Activated CD4-positive, alpha-beta memory T cell treated with anti-CD3 and anti-CD28 coated beads for 36 hours (primary cell): ENCODE measurements at regions of chr19 and their contacts with region 1.

Region 1: DNA sequence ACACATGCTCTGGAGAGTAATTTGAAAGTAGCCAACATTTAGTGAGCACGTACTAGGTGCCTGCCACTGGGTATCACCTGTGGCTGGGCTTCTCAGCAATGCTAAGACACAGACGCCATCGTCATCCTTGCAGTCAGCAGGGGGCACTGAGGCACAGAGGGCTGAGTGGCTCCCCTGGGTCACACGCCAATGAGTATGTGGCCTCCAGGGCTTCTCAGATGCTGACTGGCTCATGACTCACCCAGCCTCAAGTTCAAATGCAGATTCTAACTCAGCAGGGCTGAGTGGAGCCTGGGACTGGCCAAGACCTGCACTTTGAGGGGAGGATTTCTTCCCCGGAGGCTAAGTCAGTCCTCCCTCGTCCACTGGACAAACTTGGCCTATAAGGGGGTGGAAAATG is 115.1 kb upstream of the CACNA1A start:
- DNase-seq: peak; percentile 82
- H3K4me3 Mint-ChIP-seq: no peak overlapping the region
- H3K27ac Mint-ChIP-seq: no peak overlapping the region
- H3K4me1 Mint-ChIP-seq: no peaks in the 10 kb centered on the region
- H3K27me3 Mint-ChIP-seq: peaks cover 43% of the 10 kb centered on the region

Region 2: GRCh38 chr19:13212759-13213330 is 408.6 kb before region 1 on chr19:
- CTCF ChIA-PET with region 1: no interaction called
- POLR2A ChIA-PET with region 1: no interaction called
- intact Hi-C with region 1: no loop called
- DNase-seq: peak; percentile 85
- H3K4me3 Mint-ChIP-seq: no peak overlapping the region
- H3K27ac Mint-ChIP-seq: peak overlapping the region; percentile 1
- H3K4me1 Mint-ChIP-seq: peaks cover 21% of the 10 kb centered on the region
- H3K27me3 Mint-ChIP-seq: no peaks in the 10 kb centered on the region

Region 3: GRCh38 chr19:13574933-13575332 is 46.5 kb before region 1 on chr19:
- CTCF ChIA-PET with region 1: no interaction called
- POLR2A ChIA-PET with region 1: no interaction called
- intact Hi-C with region 1: no loop called
- DNase-seq: no peak
- H3K4me3 Mint-ChIP-seq: no peak overlapping the region
- H3K27ac Mint-ChIP-seq: no peak overlapping the region
- H3K4me1 Mint-ChIP-seq: no peaks in the 10 kb centered on the region
- H3K27me3 Mint-ChIP-seq: peaks cover 14% of the 10 kb centered on the region

Region 4: DNA sequence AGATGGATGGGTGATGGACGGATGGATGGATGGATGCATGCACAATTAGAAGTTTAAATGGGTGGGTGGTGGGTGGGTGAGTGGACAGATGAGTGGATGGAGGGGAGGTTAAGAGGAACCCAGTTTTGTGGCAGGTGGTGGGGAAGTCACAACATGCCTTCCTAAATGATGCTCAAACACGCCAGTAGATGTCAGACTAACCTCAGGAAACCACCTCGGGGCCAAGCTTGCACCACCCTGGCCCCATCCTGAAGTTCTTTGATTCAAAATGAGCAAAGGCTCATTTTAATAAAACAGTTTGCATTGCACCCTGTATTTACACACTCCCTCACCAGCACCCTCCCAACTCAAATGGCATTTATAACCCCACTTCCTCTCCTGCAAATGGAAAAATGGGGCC is 23.8 kb before region 1 on chr19:
- CTCF ChIA-PET with region 1: no interaction called
- POLR2A ChIA-PET with region 1: no interaction called
- intact Hi-C with region 1: no loop called
- DNase-seq: peak; percentile 66
- H3K4me3 Mint-ChIP-seq: no peak overlapping the region
- H3K27ac Mint-ChIP-seq: no peak overlapping the region
- H3K4me1 Mint-ChIP-seq: peaks cover 4% of the 10 kb centered on the region
- H3K27me3 Mint-ChIP-seq: peaks cover 10% of the 10 kb centered on the region

Region 5: DNA sequence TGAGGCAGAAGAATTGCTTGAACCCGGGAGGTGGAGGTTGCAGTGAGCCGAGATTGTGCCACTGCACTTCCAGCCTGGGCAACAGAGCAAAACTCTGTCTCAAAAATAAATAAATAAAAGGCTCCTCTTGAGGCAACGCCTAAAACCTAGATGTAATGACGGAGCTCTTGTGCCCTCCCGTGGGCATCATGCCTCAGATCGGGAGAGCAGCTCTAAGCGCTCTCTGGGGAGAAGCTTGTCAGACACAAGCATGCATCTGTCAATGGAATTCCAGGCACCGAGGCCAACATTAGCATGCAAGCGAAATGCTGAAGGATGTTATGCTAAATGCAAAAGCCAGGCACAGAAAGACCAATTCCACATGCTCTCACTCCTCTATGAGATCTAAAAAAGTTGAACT is 97.3 kb after region 1 on chr19:
- CTCF ChIA-PET with region 1: interaction called, 3 read pairs
- POLR2A ChIA-PET with region 1: no interaction called
- intact Hi-C with region 1: loop called (anchors 1 kb)
- DNase-seq: no peak
- H3K4me3 Mint-ChIP-seq: no peak overlapping the region
- H3K27ac Mint-ChIP-seq: no peak overlapping the region
- H3K4me1 Mint-ChIP-seq: no peaks in the 10 kb centered on the region
- H3K27me3 Mint-ChIP-seq: peaks cover 4% of the 10 kb centered on the region